Left cardiac atrium (tissue), 4 donors: ENCODE measurements at regions of chr3 and their contacts with region 1.

Region 1: GRCh38 chr3:57100046-57100695 is 39.7 kb downstream of the SPATA12 start:
- DNase-seq: peak; percentile 52
- ATAC-seq: peak; percentile 81 to 88

Region 2: GRCh38 chr3:57169872-57170623 is 69.9 kb after region 1 on chr3:
- intact Hi-C with region 1: loop called in 1 of 2 experiments (anchors 10 kb)
- DNase-seq: peak; percentile 84
- ATAC-seq: peak; percentile 75 to 84

Region 3: GRCh38 chr3:57221883-57222282 is 121.7 kb after region 1 on chr3:
- intact Hi-C with region 1: loop called in 1 of 2 experiments (anchors 5 kb)
- DNase-seq: no peak
- ATAC-seq: peak in 1 of 2 donors; percentile 26

Region 4: GRCh38 chr3:57234613-57235575 is 134.7 kb after region 1 on chr3:
- intact Hi-C with region 1: no loop called
- DNase-seq: no peak
- ATAC-seq: no peak